Ascending aorta (tissue), 2 donors: ENCODE measurements at regions of chr5 and their contacts with region 1.

Region 1: DNA sequence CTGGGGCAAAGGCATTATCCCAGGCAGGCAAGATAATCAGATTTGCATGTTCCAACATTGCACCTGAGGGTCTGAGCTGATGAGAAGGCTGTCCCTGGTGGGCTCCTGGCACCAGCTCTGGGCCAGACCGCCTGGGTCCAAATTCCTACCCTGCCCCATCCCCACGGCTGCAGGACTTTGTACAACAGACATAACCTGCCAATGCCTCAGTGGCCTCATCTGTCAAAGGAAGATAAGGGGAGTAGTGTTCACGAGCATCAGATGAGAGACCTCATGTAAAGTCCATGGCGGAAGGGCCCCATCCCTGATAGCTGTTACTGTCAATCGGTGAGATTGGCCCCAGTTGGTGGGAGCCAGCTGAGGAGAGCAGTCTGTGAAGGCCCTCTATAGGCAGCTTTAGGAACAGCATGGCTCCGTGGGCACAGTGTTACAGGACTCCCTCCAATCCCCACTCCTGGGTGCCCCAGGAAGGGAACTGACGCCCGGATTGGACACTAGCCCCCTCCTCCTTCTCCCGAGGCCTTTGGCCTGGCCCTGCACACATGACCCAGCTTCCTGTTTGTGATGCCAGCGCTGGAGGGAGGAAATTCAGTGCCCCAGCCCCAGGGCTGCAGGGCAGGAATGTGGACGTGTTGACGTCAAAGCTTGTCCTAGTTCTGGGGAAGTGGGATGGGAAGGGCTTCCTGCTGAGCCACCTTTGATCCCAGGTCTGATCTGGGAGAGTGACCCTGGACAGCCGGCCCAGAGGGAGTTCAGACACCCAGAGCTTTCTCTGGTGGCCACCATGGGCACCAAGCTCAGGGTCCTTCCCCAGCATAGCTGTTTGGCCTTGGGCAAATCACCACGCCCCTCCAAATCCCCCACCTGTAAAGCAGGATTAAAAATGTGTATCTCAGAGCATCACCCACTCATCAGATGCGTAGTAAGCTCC is 56.2 kb downstream of the DUSP1 start:
- DNase-seq: peak; percentile 73 to 94
- H3K4me3 ChIP-seq: no peak overlapping the region
- H3K27ac ChIP-seq: peak overlapping the region; percentile 79 to 83
- H3K4me1 ChIP-seq: peaks cover 20 to 26% of the 10 kb centered on the region in 2 donors
- H3K27me3 ChIP-seq: no peaks in the 10 kb centered on the region
- CTCF ChIP-seq: peak; percentile 80 to 84 (median 83)

Region 2: DNA sequence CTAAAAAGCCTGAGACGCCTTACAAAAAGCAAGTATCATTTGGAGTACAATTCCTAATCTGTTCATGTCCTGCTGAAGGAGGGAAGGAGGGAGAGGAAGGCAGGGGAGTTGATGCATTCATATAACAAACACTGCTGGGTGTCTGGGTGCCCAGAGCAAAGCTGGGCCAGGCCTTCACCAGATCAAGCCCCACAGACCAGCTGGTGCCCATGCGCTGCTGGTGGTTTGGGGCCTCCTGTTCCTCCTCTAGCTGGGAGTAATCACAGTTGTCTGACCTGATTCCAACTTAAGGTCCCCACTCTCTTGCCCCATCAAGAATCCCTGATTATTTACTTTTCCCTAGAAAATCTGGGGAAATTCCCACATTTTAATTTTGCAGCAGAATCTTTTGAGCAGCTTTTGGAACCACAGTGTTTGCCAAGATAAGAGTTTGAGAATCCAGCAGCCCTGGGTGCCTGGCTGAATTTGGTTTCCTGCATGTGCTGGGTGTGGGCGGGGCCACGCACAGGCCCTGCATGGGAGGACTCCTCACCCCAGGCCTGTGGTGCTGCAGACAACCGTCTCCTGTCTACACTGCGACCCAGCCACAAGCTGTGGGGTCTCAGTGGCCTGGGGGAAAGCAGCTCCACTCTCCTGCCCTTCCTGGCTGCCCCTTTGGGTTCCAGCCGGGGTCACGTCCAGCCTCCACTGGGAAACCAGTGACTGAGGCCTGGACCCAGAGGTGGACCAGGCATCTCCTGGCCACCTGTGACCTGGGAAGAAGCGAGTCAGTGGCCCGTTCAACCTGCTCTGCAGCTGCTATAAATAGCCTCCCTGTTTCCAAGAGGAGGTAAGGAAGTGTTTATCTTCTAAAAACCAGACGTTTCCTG is 26.2 kb before region 1 on chr5:
- intact Hi-C with region 1: no loop called
- DNase-seq: no peak
- H3K4me3 ChIP-seq: no peak overlapping the region
- H3K27ac ChIP-seq: peak overlapping the region; percentile 28 to 64
- H3K4me1 ChIP-seq: peaks cover 21 to 48% of the 10 kb centered on the region in 2 donors
- H3K27me3 ChIP-seq: no peaks in the 10 kb centered on the region
- CTCF ChIP-seq: no peak

Region 3: DNA sequence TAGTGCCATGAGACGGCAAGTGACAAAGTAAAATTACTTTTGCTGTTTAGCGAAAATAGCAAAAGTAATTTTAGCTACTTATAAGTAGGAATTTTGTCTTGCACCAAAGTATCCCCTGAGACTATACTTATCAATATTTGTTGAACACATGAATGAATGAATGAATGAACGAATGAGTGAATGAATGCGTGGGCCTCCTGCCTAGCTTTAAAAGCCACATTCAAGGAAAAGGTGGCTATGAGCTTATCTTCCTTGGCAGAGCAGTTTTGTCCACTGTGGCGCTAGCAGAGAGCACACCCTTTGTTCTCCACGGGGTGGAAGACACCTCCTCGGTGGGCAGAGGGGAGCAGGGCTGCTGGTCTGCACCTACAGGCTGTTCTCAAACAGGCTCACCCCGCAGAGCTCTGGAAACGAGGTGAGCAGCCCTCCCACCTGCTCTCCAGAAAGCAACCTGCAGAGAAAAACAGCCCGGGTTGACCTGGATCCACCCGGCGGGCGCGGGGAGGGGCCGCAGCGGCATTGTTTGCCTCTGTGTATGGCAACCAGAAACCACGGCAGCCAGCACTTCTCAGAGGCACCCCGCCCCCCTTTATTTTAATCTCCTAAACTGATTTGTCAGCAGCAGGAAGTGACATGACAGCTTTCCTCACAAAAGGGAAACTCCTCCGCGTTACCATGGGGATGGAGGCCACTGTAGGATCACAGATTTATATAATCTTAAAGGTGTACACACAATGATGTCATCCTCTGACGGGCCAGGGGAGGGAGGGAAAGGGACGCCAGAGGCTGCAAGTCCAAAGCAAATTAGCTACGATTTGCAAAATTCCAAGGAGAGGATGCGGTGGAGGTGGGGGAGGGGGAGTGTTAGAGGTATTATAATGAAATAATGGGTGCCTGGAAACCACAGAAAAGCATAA is 50.4 kb after region 1 on chr5:
- intact Hi-C with region 1: loop called (anchors 2 kb)
- DNase-seq: peak; percentile 98 to 100
- H3K4me3 ChIP-seq: peak overlapping the region; percentile 88 to 89
- H3K27ac ChIP-seq: peak overlapping the region; percentile 97 to 100
- H3K4me1 ChIP-seq: peaks cover 3 to 7% of the 10 kb centered on the region in 2 donors
- H3K27me3 ChIP-seq: no peaks in the 10 kb centered on the region
- CTCF ChIP-seq: no peak

Region 4: GRCh38 chr5:172910828-172911627 is 196.3 kb after region 1 on chr5:
- intact Hi-C with region 1: no loop called
- DNase-seq: peak; percentile 66 to 95
- H3K4me3 ChIP-seq: no peak overlapping the region
- H3K27ac ChIP-seq: peak overlapping the region; percentile 96 to 97
- H3K4me1 ChIP-seq: peaks cover 26 to 46% of the 10 kb centered on the region in 2 donors
- H3K27me3 ChIP-seq: no peaks in the 10 kb centered on the region
- CTCF ChIP-seq: peak in 2 of 3 experiments; percentile 12 to 22

Region 5: GRCh38 chr5:172932313-172933017 is 217.7 kb after region 1 on chr5:
- intact Hi-C with region 1: loop called (anchors 1 kb)
- DNase-seq: peak in 1 of 2 donors; percentile 91
- H3K4me3 ChIP-seq: peak overlapping the region in 1 of 2 donors; percentile 11
- H3K27ac ChIP-seq: peak overlapping the region; percentile 93 to 94
- H3K4me1 ChIP-seq: peaks cover 18 to 22% of the 10 kb centered on the region in 2 donors
- H3K27me3 ChIP-seq: no peaks in the 10 kb centered on the region
- CTCF ChIP-seq: peak; percentile 96 to 98 (median 97)

Region 6: DNA sequence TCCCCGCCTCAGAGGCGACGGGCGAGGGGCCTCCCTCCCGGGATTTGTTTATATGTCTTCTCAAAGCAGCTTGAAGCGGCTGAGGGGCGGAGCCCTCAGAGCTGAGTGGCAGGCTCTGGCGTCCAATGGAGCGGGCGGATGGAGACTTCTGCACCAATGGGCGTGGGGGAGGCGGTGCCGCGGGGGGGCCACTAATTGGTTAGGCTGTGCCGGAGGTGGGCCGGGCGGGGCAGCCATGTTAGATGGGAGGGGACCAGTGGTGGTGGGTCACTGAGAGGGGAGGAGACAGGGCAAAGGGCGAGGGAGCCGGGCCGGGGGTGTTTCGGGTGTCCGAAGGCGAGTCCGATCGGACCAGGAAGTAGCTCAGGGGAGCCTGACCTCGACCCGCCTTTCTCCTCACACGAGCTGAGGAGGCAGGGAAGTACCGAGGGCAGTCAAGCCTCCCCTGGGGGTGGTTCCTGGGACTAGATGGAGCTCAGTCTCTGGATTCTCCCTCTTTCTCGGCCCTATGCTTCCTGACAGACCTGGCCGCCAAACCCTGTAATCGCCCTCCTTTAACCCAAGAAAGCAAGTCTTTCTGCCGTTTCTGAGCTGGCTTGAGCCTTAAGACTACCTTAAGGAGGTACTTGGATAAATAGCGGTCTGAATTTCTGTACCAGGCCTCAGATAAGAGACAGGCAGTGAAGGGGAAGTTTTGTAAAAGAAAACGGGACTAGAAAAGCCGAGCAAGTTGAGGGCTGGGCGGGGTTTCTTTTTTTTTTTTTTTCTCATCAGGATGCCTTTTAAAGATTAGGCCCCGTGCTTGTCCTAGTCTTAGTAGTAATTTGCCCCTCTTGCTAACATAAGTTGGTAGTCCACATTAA is 342.5 kb after region 1 on chr5:
- intact Hi-C with region 1: loop called (anchors 1 kb)
- DNase-seq: peak; percentile 98 to 100
- H3K4me3 ChIP-seq: peak overlapping the region; percentile 76 to 98
- H3K27ac ChIP-seq: peak overlapping the region; percentile 93 to 100
- H3K4me1 ChIP-seq: peaks cover 0 to 23% of the 10 kb centered on the region in 2 donors
- H3K27me3 ChIP-seq: no peaks in the 10 kb centered on the region
- CTCF ChIP-seq: peak; percentile 19 to 30 (median 21)